ENCODE measurements at regions of chr2 and their contacts with region 1.

Region 1: GRCh38 chr2:237923481-237924163 is 43.2 kb upstream of the UBE2F start:
- DNase-seq: peak; percentile 98
- H3K4me3 ChIP-seq: peak overlapping the region; percentile 24 to 52; a peak in 2 of 4 replicates
- H3K27ac ChIP-seq: peak overlapping the region in 1 of 2 experiments; percentile 94; a peak in 2 of 4 replicates
- H3K4me1 ChIP-seq: peaks cover 0 to 17% of the 10 kb centered on the region in 2 experiments; a peak in 2 of 4 replicates
- H3K27me3 ChIP-seq: no peaks in the 10 kb centered on the region
- CTCF ChIP-seq: peak; percentile 93
- EP300 ChIP-seq: peak in 1 of 2 experiments; percentile 34; a peak in 1 of 4 replicates
- RAD21 ChIP-seq: peak; percentile 75

Region 2: GRCh38 chr2:237471440-237472183 is 452.0 kb before region 1 on chr2:
- CTCF ChIA-PET with region 1: no interaction called
- POLR2A ChIA-PET with region 1: no interaction called
- DNase-seq: peak; percentile 54
- H3K4me3 ChIP-seq: no peak overlapping the region
- H3K27ac ChIP-seq: peak overlapping the region in 1 of 2 experiments; percentile 3; a peak in 1 of 4 replicates
- H3K4me1 ChIP-seq: peaks cover 8 to 22% of the 10 kb centered on the region in 2 experiments; a peak in 3 of 4 replicates
- H3K27me3 ChIP-seq: no peaks in the 10 kb centered on the region
- CTCF ChIP-seq: peak; percentile 50
- EP300 ChIP-seq: no peak
- RAD21 ChIP-seq: no peak; the same call in 1 of the 2 replicates

Region 3: DNA sequence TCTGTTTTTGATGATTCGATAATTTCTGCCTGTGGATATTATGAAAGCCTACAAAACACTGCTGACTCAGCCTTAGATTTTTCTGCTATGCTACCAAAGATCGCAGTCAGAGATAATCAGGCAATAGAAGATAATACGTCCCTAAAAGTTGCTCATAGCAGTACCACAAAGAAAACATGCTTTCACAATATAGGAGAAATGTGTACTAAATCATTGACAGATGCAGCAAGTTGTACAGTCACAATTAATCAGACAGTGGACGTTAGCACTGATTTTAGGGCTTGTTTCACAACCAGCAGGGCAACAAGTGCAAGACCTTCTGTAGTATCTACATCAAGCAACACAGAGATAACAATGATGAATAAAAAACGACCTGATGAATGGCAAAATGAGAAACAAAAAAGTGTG is 105.6 kb before region 1 on chr2:
- CTCF ChIA-PET with region 1: no interaction called
- POLR2A ChIA-PET with region 1: no interaction called
- DNase-seq: no peak
- H3K4me3 ChIP-seq: peak overlapping the region in 1 of 2 experiments; percentile 12; a peak in 1 of 4 replicates
- H3K27ac ChIP-seq: peak overlapping the region; percentile 18 to 53; a peak in 2 of 4 replicates
- H3K4me1 ChIP-seq: peaks cover 10 to 15% of the 10 kb centered on the region in 2 experiments; a peak in 2 of 4 replicates
- H3K27me3 ChIP-seq: no peaks in the 10 kb centered on the region
- CTCF ChIP-seq: no peak
- EP300 ChIP-seq: peak; percentile 21 to 72; a peak in 2 of 4 replicates
- RAD21 ChIP-seq: no peak

Region 4: GRCh38 chr2:237865623-237866041 is 58.0 kb before region 1 on chr2:
- CTCF ChIA-PET with region 1: interaction called, 71 read pairs
- POLR2A ChIA-PET with region 1: interaction called, 5 read pairs
- DNase-seq: peak; percentile 79
- H3K4me3 ChIP-seq: no peak overlapping the region
- H3K27ac ChIP-seq: peak overlapping the region; percentile 81 to 96
- H3K4me1 ChIP-seq: peaks cover 23 to 65% of the 10 kb centered on the region in 2 experiments
- H3K27me3 ChIP-seq: no peaks in the 10 kb centered on the region
- CTCF ChIP-seq: peak; percentile 29
- EP300 ChIP-seq: no peak
- RAD21 ChIP-seq: peak; percentile 30; the same call in 1 of the 2 replicates

Region 5: DNA sequence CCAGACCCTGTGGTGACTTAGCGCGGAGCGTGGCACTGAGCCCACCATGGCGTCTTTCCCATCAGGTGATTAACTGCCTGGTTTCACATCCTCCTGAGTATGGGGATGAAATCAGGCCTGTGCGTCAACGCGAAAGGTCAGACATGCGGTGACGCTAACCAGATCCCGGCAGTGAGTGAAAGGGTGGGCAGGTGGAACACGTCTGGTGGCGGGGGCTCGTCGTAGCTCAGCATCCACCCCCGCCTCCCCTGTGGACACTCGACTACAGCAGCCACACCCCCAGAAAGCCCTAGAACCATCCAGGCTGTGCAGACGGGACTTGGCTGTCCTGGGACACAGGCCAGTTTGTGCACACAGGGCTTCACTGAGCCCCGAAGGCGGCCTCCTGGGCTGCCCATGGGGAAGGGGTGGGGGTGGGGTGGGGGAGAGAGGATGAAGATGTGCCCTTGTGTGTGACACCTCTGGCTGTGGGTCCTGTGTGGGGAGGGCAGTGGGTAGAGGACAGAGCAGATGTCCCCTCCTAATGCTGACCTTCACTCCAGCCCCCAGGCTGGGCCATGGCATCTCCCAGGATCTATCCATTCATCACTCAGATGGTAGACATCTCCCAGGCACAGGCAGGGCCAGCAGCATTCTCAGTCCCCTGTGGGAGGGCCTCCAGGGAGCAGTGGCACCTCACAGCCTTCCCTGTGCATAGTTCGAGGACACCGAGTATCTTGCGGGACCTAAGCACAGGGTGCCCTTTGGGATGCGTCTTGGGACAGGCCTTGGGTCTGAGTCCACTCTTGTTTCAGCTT is 36.7 kb before region 1 on chr2:
- CTCF ChIA-PET with region 1: interaction called, 19 read pairs
- POLR2A ChIA-PET with region 1: interaction called, 9 read pairs
- DNase-seq: peak; percentile 86
- H3K4me3 ChIP-seq: no peak overlapping the region
- H3K27ac ChIP-seq: peak overlapping the region in 1 of 2 experiments; percentile 99; a peak in 2 of 4 replicates
- H3K4me1 ChIP-seq: peaks cover 0 to 58% of the 10 kb centered on the region in 2 experiments; a peak in 1 of 4 replicates
- H3K27me3 ChIP-seq: no peaks in the 10 kb centered on the region
- CTCF ChIP-seq: no peak
- EP300 ChIP-seq: peak; percentile 9 to 98; a peak in 3 of 4 replicates
- RAD21 ChIP-seq: peak; percentile 16

Region 6: DNA sequence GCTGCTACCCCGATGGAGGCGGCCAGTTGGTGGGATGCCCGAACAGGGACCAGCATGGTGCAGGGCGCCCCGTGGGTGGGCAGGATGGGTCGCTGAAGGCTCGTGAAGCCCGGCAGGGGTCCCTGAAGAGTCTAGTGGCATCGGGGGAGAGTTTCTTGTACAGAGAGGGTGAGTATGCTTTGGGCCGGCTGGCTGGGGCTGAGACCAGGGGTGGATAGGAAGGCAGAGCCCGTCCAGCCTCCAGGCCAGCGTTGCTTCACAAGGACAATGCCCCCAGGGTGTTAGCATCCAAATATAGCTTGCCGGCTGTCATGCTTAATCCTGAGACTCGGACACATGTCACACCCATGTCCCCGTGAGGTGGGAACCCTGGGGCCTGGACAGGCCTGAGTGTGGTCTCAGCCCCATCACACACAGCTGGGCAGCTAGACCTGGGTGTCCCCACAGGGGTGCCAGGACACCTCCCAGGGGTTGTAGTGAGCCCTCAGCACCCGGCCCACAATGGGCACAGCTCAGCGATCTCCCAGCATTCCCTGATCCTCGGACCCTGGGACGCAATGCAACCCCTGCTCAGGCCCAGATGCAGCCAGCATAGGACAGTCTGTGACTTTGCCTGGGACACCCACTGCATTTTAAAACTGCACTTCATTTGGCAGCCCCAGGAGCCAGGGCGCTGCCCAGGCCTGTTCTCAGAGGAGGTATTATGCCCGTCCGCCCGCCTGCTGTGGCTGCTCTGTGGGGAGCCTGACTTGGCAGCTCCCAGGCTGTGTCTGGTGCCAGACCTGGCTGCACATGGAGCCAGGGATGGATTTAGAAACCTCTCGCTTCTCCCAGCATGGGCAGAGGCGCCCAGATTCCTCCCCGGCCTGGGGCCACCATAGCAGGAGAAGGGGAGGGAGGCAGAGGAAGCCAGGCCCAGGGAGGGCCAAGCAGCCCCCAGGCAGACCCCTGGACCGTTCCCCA is 27.8 kb before region 1 on chr2:
- CTCF ChIA-PET with region 1: interaction called, 11 read pairs
- POLR2A ChIA-PET with region 1: no interaction called
- DNase-seq: peak; percentile 72
- H3K4me3 ChIP-seq: no peak overlapping the region
- H3K27ac ChIP-seq: peak overlapping the region in 1 of 2 experiments; percentile 89; a peak in 2 of 4 replicates
- H3K4me1 ChIP-seq: peaks cover 7 to 55% of the 10 kb centered on the region in 2 experiments; a peak in 3 of 4 replicates
- H3K27me3 ChIP-seq: no peaks in the 10 kb centered on the region
- CTCF ChIP-seq: no peak
- EP300 ChIP-seq: 0 out of 4 replicates have a peak, but pooled peaks of 1 of the 2 experiments have one; percentile 16
- RAD21 ChIP-seq: no peak

Region 7: DNA sequence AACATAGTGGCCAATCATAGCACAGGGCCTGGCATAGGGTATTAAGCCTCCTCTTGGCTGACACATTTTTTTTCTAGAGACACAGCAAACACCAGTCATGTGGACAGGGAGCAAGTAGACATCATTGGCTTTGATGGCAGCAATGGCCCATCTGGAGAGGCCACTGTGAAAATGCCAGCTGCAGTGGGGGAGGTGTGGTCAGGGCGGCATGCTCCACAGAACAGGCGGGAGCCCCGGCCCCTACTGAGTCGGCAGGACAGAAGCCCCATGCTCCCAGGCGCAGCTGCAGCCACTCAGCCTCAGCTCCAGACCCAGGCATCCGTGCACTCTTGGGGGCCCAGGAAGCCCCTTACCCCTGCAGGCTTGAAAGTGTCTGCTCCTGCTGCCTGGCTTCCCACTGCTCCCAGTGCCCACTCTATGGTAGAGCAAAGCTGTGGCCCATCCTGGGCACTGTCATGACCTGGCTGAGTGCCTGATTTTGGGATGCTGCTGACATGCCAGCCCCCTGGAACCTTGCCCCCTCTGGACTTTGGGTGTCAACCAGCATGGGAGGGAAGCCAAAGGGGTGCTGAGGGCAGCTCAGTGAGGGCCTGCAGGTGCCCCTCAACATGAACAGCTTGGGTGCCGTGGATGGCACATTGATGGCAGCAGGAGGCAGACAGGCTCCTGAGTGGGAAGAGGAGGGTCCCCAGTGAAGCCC is 19.9 kb after region 1 on chr2:
- CTCF ChIA-PET with region 1: interaction called, 12 read pairs
- POLR2A ChIA-PET with region 1: no interaction called
- DNase-seq: no peak
- H3K4me3 ChIP-seq: no peak overlapping the region
- H3K27ac ChIP-seq: no peak overlapping the region
- H3K4me1 ChIP-seq: no peaks in the 10 kb centered on the region
- H3K27me3 ChIP-seq: no peaks in the 10 kb centered on the region
- CTCF ChIP-seq: no peak
- EP300 ChIP-seq: no peak
- RAD21 ChIP-seq: no peak

Measured in SK-N-SH (cell line).